ENCODE measurements at regions of chr12 and their contacts with region 1.

Region 1: DNA sequence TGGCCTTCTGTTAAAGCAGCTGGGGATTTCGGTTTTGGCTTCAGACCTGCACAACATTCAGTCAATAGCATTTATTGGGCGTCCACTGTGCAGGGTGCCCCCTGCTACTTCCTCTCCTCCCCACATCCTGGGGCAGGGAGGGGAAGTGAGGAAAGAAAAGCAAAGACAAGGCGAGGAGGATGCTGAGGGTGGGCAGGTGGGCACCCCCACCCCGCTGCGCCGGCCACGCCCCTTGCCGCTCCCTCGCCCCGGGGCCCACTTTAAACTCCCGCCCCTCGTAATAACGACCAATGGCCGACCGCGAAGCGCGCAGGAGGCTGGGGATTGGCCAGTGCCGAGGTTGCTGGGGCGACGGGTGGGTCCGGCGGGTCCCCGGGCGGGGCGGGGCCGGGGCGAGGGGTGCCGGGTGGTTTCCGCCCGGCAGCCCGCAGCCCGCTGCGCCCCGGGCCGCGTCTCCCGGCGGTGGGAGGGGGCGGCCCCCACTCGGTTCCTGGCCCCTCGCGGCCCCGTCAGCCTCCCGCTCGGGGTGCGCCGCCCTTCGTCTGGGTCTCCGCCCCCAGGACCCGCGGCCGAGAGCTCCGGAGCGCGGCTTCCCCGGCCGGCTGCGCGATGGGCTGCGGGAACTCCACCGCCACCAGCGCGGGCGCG is at the start of gene C12orf75:
- DNase-seq: peak; percentile 70 to 90 (median 80)
- ATAC-seq: peak; percentile 84 to 87
- H3K4me3 Mint-ChIP-seq: peak within 1 kb of the TSS; percentile 82 to 95 (median 87)
- H3K27ac Mint-ChIP-seq: peak within 1 kb of the TSS; percentile 24 to 94 (median 90)
- H3K4me1 Mint-ChIP-seq: peaks cover 23 to 67% (median 48%) of the 10 kb centered on the region in 4 donors
- H3K27me3 Mint-ChIP-seq: no peaks in the 10 kb centered on the region
- polyA plus RNA-seq, gene C12orf75: 33.8 to 130 (median 41.9) TPM

Region 2: GRCh38 chr12:105100998-105101397 is 229.4 kb before region 1 on chr12:
- POLR2A ChIA-PET with region 1: no interaction called
- DNase-seq: no peak
- ATAC-seq: no peak
- H3K4me3 Mint-ChIP-seq: no peak overlapping the region
- H3K27ac Mint-ChIP-seq: no peak overlapping the region
- H3K4me1 Mint-ChIP-seq: no peaks in the 10 kb centered on the region
- H3K27me3 Mint-ChIP-seq: peaks cover 10 to 26% (median 18%) of the 10 kb centered on the region in 5 donors

Region 3: DNA sequence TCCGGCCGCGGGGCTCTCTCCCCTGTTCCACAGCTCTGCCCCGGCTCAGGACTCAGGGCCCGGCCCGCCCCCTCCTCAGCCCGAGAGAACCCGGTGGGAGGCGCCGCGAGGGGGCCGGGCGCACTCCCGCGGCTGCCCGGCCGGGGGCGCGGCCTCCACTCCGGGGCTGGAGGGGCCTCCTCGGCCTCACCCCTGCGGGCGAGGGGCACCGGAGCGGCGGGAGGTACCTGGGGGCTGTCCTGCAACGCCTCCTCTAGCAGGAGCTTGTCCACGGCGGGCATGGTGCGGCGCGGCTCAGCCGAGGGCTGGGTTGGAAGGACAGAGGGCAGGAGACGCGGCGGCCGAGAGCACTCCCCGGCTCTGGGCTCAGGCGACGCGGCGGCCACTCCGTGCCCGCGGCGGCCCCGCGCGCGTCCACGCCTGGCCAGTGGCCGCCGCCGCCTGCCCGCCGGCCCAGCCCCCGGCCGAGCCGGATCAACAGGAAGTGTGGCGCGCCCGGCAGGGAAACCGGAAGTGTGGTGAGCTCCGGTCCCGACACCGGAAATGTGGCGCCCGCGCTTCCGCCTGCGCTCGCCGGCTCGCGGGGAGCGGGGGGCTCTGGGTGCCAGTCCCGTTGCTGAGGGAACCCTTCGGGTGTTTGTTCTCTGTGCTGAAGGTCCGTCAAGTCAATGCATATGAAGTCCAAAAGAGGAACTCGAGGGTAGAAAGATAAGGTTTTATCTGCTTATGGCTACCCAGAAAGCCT is 94.5 kb before region 1 on chr12 and contains the start of gene APPL2:
- POLR2A ChIA-PET with region 1: interaction called, 13 read pairs
- DNase-seq: peak; percentile 61 to 88 (median 72)
- ATAC-seq: peak; percentile 84 to 85
- H3K4me3 Mint-ChIP-seq: peak within 1 kb of the TSS; percentile 79 to 95 (median 94)
- H3K27ac Mint-ChIP-seq: peak within 1 kb of the TSS; percentile 83 to 96 (median 93)
- H3K4me1 Mint-ChIP-seq: peaks cover 24 to 53% (median 51%) of the 10 kb centered on the region in 4 donors
- H3K27me3 Mint-ChIP-seq: no peaks in the 10 kb centered on the region
- polyA plus RNA-seq, gene APPL2: 8.2 to 14.6 (median 13.6) TPM

Region 4: DNA sequence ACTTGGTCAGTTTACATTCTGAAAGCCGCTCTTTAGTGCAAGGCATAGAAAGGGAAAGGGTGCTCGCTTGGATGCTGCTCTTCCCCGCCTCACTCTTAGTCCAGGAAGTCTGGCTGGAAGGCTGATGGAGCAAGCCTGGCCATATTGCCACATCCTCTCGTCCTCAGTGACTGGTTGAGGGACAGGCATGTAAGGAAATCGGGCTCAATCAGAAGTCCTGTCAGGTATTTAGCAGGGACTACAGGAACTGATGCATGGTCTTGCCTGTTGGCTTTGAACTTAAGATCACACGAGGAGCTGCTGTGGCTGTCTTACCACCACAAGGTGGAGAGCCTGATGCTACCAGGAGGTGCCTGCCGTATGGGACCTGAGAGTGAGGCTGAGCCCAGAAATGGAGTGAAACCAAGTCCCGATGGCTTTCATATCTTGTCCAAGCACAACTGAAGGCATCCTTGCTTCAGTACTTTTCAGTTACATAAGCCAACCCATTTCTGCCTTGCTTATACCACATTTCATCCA is 10.7 kb before region 1 on chr12:
- POLR2A ChIA-PET with region 1: interaction called, 16 read pairs
- DNase-seq: peak in 8 of 10 donors; percentile 13 to 66 (median 27)
- ATAC-seq: peak; percentile 88 to 95
- H3K4me3 Mint-ChIP-seq: no peak overlapping the region
- H3K27ac Mint-ChIP-seq: peak overlapping the region in 1 of 10 donors; percentile 5
- H3K4me1 Mint-ChIP-seq: peaks cover 10 to 20% (median 11%) of the 10 kb centered on the region in 4 donors
- H3K27me3 Mint-ChIP-seq: no peaks in the 10 kb centered on the region

Region 5: DNA sequence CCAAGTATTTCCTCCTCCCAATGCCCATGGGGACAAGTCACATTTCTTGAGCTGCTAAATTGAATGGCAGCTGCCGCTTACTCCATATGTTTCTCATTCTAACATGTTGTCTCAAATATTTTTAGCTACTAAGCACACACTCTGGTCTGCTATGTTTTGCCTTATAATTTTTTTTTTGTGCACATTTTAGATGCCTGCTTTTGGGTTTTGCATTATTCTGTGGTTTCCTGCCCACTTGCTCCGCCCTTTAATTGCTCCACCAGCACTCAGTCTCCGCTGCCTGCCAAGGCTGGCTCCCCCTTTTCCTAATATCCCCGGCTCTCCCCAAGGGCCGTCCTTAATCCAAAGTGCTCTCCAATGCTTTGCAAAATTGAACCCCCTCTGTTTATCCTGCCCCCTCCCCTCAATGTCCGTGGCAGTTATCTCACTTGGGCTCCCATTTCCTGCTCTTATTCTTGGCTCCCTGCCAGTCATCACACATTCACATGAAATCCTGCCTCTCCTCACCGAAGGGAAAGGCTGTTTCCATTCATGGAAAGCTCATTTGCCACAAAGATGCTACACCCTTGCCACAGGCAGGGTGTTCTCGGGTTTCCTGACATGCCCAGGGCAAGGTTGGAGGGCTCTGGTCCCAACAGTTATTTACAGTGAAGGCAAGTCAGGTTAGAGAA is 79.5 kb after region 1 on chr12:
- POLR2A ChIA-PET with region 1: no interaction called
- DNase-seq: peak in 3 of 10 donors; percentile 5 to 24 (median 11)
- ATAC-seq: no peak
- H3K4me3 Mint-ChIP-seq: peak overlapping the region; percentile 54 to 81 (median 77)
- H3K27ac Mint-ChIP-seq: peak overlapping the region in 6 of 10 donors; percentile 13 to 46 (median 33)
- H3K4me1 Mint-ChIP-seq: peaks cover 12 to 18% (median 16%) of the 10 kb centered on the region in 4 donors
- H3K27me3 Mint-ChIP-seq: peaks cover 0 to 9% (median 0%) of the 10 kb centered on the region in 5 donors

Region 6: GRCh38 chr12:105420659-105421240 is 90.3 kb after region 1 on chr12:
- POLR2A ChIA-PET with region 1: no interaction called
- DNase-seq: peak; percentile 20 to 73 (median 46)
- ATAC-seq: peak; percentile 70 to 72
- H3K4me3 Mint-ChIP-seq: no peak overlapping the region
- H3K27ac Mint-ChIP-seq: no peak overlapping the region
- H3K4me1 Mint-ChIP-seq: peaks cover 0 to 2% (median 0%) of the 10 kb centered on the region in 4 donors
- H3K27me3 Mint-ChIP-seq: peaks cover 0 to 3% (median 0%) of the 10 kb centered on the region in 5 donors

Measured in naive thymus-derived CD8-positive, alpha-beta T cell (primary cell).